ENCODE measurements at regions of chr11 and their contacts with region 1.

Region 1: GRCh38 chr11:10933455-10934292 is 75.8 kb upstream of the ZBED5 start:
- DNase-seq: peak; percentile 80 to 85
- ATAC-seq: peak; percentile 78 to 84
- H3K4me3 ChIP-seq: peak overlapping the region; percentile 45 to 65 (median 54)
- H3K27ac ChIP-seq: peak overlapping the region; percentile 64 to 84 (median 67)
- H3K4me1 ChIP-seq: peaks cover 6 to 7% of the 10 kb centered on the region in 2 donors
- H3K27me3 ChIP-seq: no peaks in the 10 kb centered on the region
- CTCF ChIP-seq: peak; percentile 92 to 98 (median 94)
- POLR2A ChIP-seq: no peak

Region 2: GRCh38 chr11:11000579-11001283 is 67.1 kb after region 1 on chr11:
- in situ Hi-C with region 1: no loop called
- intact Hi-C with region 1: no loop called
- DNase-seq: no peak
- ATAC-seq: no peak
- H3K4me3 ChIP-seq: no peak overlapping the region
- H3K27ac ChIP-seq: no peak overlapping the region
- H3K4me1 ChIP-seq: no peaks in the 10 kb centered on the region
- H3K27me3 ChIP-seq: peaks cover 0 to 2% (median 0%) of the 10 kb centered on the region in 3 donors
- CTCF ChIP-seq: no peak
- POLR2A ChIP-seq: no peak

Region 3: GRCh38 chr11:11022125-11022730 is 88.6 kb after region 1 on chr11:
- in situ Hi-C with region 1: loop called (anchors 5 to 10 kb)
- intact Hi-C with region 1: loop called (anchors 1 kb)
- DNase-seq: no peak
- ATAC-seq: no peak
- H3K4me3 ChIP-seq: no peak overlapping the region
- H3K27ac ChIP-seq: no peak overlapping the region
- H3K4me1 ChIP-seq: no peaks in the 10 kb centered on the region
- H3K27me3 ChIP-seq: no peaks in the 10 kb centered on the region
- CTCF ChIP-seq: peak; percentile 16 to 59 (median 38)
- POLR2A ChIP-seq: no peak

Region 4: DNA sequence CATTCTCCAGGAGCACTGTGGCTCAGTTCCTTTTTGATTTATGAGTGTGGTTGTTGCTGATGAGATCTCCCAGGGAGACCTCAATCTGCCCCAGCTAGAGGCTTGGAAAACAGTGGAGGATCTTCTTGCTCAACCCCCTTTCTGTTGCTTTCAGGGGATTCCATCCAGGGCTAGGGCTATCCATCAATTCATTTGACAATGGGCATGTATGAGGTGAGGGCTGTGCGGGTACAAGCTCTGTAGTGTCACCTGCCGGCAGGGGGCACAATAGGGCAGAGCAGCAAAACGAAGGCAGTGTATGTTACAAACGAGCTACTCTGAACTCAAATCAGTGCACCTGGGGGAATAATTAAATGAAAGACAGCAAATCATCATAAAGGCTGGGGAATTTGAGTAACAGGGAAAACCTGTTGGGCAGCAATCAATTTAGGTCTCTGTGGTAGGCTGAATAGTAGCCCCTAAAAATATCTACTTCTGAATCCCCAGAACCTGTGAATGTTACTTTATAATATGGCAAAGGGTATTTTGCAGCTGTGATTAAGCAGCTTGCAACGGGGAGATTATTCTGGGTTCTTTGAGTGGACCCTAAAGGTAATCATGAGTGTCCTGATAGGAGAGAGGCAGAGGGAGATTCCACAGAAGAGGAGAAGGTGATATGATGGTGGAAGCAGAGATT is 94.5 kb after region 1 on chr11:
- in situ Hi-C with region 1: loop called (anchors 5 to 10 kb)
- intact Hi-C with region 1: no loop called
- DNase-seq: peak; percentile 38 to 53
- ATAC-seq: peak; percentile 82 to 94
- H3K4me3 ChIP-seq: no peak overlapping the region
- H3K27ac ChIP-seq: no peak overlapping the region
- H3K4me1 ChIP-seq: no peaks in the 10 kb centered on the region
- H3K27me3 ChIP-seq: no peaks in the 10 kb centered on the region
- CTCF ChIP-seq: peak; percentile 65 to 85 (median 72)
- POLR2A ChIP-seq: no peak

Measured in gastrocnemius medialis (tissue), 4 donors.